ENCODE measurements at regions of chr2 and their contacts with region 1.

Region 1: GRCh38 chr2:177552422-177553175 is 160.0 kb downstream of the AGPS start:
- DNase-seq: peak; percentile 80 to 98 (median 88)

Region 2: GRCh38 chr2:176729706-176730569 is 822.7 kb before region 1 on chr2:
- intact Hi-C with region 1: no loop called
- DNase-seq: no peak

Region 3: GRCh38 chr2:177604271-177605065 is 51.9 kb after region 1 on chr2:
- intact Hi-C with region 1: loop called (anchors 5 kb)
- DNase-seq: no peak

Region 4: DNA sequence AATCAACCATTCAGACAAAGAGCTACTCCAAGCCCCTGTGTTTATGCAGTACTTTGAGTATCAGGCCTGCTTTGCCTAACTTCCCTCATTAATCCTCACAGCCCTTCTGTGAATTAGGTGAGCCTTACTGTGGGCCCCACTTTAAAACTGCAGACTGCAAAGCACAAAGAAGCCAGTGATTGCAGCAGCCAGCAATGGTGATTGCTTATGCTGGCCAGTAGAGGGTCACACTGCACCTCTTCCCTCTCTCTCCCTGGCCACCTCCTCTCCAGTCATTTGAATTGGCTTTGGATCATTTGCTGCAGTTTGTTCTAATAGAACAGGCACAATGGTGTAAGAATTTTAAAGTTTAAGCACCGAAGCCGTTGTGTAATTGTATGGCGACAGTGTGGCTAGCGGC is 69.9 kb after region 1 on chr2:
- intact Hi-C with region 1: loop called (anchors 5 kb)
- DNase-seq: peak in 2 of 10 donors; percentile 29 to 46

Region 5: GRCh38 chr2:177666408-177666807 is 113.8 kb after region 1 on chr2:
- intact Hi-C with region 1: no loop called
- DNase-seq: no peak

Measured in posterior cingulate gyrus (tissue), 11 donors.